Psoas muscle (tissue), 8 donors: ENCODE measurements at regions of chr5 and their contacts with region 1.

Region 1: DNA sequence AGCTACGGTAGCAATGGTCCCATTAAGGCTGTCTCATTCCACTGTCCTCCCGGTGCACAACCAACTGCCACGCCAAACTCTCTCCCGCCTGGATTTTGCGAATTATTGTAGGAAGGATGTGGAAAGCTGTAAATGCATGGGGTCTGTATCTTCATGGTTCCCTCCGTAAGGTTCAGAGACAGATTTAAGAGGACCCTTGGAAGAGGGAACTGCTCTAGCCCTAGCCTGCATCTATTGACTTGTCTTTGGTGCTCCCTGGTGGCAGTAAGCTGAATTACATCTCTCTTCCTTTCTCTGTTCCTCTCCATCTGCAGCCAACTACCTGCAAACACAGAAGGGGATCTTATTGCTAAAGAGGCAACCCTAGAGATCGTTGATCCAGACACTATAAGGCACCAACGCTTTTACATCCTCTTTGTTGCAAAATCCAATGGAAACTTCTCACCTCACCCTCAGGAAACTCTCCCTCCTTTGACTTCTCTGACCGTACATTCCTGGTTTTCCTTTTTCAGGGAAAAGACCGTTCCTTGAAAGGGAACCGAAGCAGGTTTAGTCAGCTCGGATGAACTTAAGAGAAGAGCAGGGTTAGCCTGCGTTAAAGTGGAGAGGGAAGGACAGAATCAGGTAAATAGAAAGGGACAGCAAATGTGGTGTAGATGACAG is 11.9 kb downstream of the CAPSL start:
- DNase-seq: no peak
- ATAC-seq: peak; percentile 57 to 70 (median 62)
- H3K4me3 ChIP-seq: no peak overlapping the region
- H3K27ac ChIP-seq: no peak overlapping the region
- H3K4me1 ChIP-seq: no peaks in the 10 kb centered on the region
- H3K27me3 ChIP-seq: peaks cover 2 to 33% (median 6%) of the 10 kb centered on the region in 3 donors
- CTCF ChIP-seq: peak; percentile 88

Region 2: DNA sequence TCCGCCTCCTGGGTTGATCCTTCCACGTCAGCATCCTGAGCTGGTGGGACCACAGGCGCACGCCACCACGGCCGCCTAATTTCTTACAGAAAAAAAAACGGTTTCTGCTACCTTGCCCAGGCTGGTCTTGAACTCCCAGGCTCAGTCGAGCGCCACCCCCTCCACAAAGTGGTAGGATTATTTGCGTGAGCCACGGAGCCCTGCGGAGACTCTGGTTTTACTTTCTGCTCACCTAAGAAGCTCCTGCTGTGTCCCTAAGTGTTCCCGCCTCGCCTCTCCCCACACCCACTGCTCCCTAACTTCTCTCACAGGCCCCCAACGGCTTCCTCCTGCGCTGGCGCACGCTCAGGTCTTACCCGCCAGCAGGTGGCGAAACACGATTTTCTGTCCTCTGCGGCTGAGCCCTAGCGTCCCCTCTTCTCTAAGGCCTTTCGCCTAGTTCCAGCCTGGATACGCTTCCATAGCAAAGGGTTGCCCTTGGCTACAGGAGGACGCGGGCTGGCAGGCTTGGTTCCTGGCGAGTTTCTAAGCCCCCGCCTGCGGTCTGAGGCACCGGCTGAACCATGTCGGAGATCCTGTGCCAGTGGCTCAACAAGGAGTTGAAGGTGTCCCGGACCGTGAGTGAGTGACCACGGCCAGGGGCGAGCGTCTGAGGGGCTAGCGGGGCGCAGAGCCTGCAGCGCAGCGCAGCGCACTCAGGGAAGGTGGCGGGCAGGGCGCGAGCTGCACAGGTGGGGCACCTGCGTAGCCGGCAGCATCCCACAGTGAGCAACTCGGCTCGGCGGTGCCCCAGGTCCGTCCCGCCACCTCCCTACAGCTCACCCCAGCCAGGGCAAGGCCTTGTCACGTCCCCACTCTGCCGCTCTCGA is 308.9 kb before region 1 on chr5 and contains the start of gene SPEF2:
- intact Hi-C with region 1: loop called (anchors 2 to 10 kb)
- DNase-seq: peak; percentile 77 to 87
- ATAC-seq: peak; percentile 87 to 99 (median 97)
- H3K4me3 ChIP-seq: peak within 1 kb of the TSS; percentile 80
- H3K27ac ChIP-seq: no peak within 1 kb of the TSS
- H3K4me1 ChIP-seq: no peaks in the 10 kb centered on the region
- H3K27me3 ChIP-seq: no peaks in the 10 kb centered on the region
- CTCF ChIP-seq: peak; percentile 63
- total RNA-seq, gene SPEF2: 0.27 to 0.71 (median 0.66) TPM

Region 3: GRCh38 chr5:35777358-35778087 is 149.0 kb before region 1 on chr5:
- intact Hi-C with region 1: loop called (anchors 2 to 5 kb)
- DNase-seq: peak in 1 of 2 donors; percentile 26
- ATAC-seq: no peak
- H3K4me3 ChIP-seq: no peak overlapping the region
- H3K27ac ChIP-seq: no peak overlapping the region
- H3K4me1 ChIP-seq: no peaks in the 10 kb centered on the region
- H3K27me3 ChIP-seq: no peaks in the 10 kb centered on the region
- CTCF ChIP-seq: peak; percentile 49